ENCODE measurements at regions of chr3 and their contacts with region 1.

Region 1: GRCh38 chr3:146682171-146682570 is 77.0 kb upstream of the PLSCR5 start:
- DNase-seq: no peak
- ATAC-seq: no peak
- H3K4me3 ChIP-seq: no peak overlapping the region
- H3K4me3 Mint-ChIP-seq: no peak overlapping the region
- H3K27ac ChIP-seq: no peak overlapping the region
- H3K27ac Mint-ChIP-seq: no peak overlapping the region
- H3K4me1 ChIP-seq: no peaks in the 10 kb centered on the region
- H3K4me1 Mint-ChIP-seq: no peaks in the 10 kb centered on the region
- H3K27me3 ChIP-seq: no peaks in the 10 kb centered on the region
- H3K27me3 Mint-ChIP-seq: no peaks in the 10 kb centered on the region
- CTCF ChIP-seq: no peak

Region 2: DNA sequence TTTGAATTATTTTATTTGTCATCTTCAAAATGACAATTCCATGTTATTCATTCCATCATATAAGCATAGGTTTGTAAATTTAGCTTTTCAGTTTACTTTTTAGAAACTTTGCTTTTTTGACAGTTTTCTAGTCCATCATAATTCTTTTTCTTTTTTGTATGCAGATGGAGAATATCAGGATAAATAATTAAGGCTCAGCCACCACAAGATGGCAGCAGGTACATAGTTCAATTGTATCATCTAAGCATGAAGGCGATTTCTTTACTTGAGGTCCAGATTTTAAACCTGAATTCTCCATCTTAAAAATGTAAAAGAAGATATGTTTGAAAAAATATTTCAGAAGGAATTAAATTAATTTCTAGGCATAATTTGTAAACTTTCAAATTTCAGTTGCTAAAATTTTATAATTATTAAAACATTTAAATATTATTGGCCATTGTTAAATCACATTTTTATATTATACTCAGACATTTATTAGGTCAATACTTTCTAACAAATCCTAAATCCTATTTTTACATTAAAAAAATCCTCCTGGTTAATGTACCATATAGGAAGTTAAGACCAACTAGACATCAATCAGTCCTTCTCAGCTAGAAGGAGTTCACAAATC is 92.2 kb before region 1 on chr3:
- CTCF ChIA-PET with region 1: no interaction called
- POLR2A ChIA-PET with region 1: no interaction called
- intact Hi-C with region 1: no loop called
- DNase-seq: peak; percentile 10
- ATAC-seq: no peak
- H3K4me3 ChIP-seq: no peak overlapping the region
- H3K4me3 Mint-ChIP-seq: no peak overlapping the region
- H3K27ac ChIP-seq: no peak overlapping the region
- H3K27ac Mint-ChIP-seq: no peak overlapping the region
- H3K4me1 ChIP-seq: no peaks in the 10 kb centered on the region
- H3K4me1 Mint-ChIP-seq: no peaks in the 10 kb centered on the region
- H3K27me3 ChIP-seq: peaks cover 0 to 2% (median 0%) of the 10 kb centered on the region in 4 experiments
- H3K27me3 Mint-ChIP-seq: peaks cover 8% of the 10 kb centered on the region
- CTCF ChIP-seq: peak; percentile 60

Region 3: GRCh38 chr3:146646261-146646660 is 35.9 kb before region 1 on chr3:
- CTCF ChIA-PET with region 1: no interaction called
- POLR2A ChIA-PET with region 1: no interaction called
- intact Hi-C with region 1: no loop called
- DNase-seq: no peak
- ATAC-seq: no peak
- H3K4me3 ChIP-seq: no peak overlapping the region
- H3K4me3 Mint-ChIP-seq: no peak overlapping the region
- H3K27ac ChIP-seq: no peak overlapping the region
- H3K27ac Mint-ChIP-seq: no peak overlapping the region
- H3K4me1 ChIP-seq: no peaks in the 10 kb centered on the region
- H3K4me1 Mint-ChIP-seq: no peaks in the 10 kb centered on the region
- H3K27me3 ChIP-seq: no peaks in the 10 kb centered on the region
- H3K27me3 Mint-ChIP-seq: no peaks in the 10 kb centered on the region
- CTCF ChIP-seq: no peak

Region 4: DNA sequence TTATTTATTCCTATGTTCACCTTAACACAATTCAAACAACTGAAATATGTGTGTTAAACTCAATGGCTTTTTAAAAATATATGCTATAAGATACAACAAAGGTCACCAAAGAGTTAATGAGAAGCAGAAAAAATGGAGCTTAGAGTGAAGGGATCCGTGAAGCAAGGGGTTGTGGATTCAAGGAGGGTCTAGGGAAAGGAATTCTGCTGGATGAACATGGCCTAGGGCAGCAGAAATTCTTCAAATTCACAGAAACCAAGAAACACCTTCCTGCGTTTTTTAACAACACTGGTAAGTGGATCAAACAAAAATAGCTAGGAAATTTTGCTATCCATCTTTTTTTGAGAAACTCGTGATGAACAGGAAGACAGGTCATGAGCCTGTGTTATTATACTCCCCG is 17.8 kb before region 1 on chr3:
- CTCF ChIA-PET with region 1: no interaction called
- POLR2A ChIA-PET with region 1: no interaction called
- intact Hi-C with region 1: loop called (anchors 1 kb)
- DNase-seq: no peak
- ATAC-seq: no peak
- H3K4me3 ChIP-seq: no peak overlapping the region
- H3K4me3 Mint-ChIP-seq: no peak overlapping the region
- H3K27ac ChIP-seq: no peak overlapping the region
- H3K27ac Mint-ChIP-seq: no peak overlapping the region
- H3K4me1 ChIP-seq: no peaks in the 10 kb centered on the region
- H3K4me1 Mint-ChIP-seq: no peaks in the 10 kb centered on the region
- H3K27me3 ChIP-seq: no peaks in the 10 kb centered on the region
- H3K27me3 Mint-ChIP-seq: no peaks in the 10 kb centered on the region
- CTCF ChIP-seq: no peak

Measured in B cell (primary cell).